ENCODE measurements at regions of chr1 and their contacts with region 1.

Region 1: GRCh38 chr1:38873027-38873969 is at the start of gene MYCBP:
- DNase-seq: peak; percentile 96
- H3K4me3 Mint-ChIP-seq: peak within 1 kb of the TSS; percentile 83
- H3K27ac Mint-ChIP-seq: peak within 1 kb of the TSS; percentile 17
- H3K4me1 Mint-ChIP-seq: peaks cover 19% of the 10 kb centered on the region
- H3K27me3 Mint-ChIP-seq: no peaks in the 10 kb centered on the region
- CTCF ChIP-seq: no peak
- total RNA-seq, gene MYCBP: 16.1 and 18.9 TPM in 2 replicates

Region 2: DNA sequence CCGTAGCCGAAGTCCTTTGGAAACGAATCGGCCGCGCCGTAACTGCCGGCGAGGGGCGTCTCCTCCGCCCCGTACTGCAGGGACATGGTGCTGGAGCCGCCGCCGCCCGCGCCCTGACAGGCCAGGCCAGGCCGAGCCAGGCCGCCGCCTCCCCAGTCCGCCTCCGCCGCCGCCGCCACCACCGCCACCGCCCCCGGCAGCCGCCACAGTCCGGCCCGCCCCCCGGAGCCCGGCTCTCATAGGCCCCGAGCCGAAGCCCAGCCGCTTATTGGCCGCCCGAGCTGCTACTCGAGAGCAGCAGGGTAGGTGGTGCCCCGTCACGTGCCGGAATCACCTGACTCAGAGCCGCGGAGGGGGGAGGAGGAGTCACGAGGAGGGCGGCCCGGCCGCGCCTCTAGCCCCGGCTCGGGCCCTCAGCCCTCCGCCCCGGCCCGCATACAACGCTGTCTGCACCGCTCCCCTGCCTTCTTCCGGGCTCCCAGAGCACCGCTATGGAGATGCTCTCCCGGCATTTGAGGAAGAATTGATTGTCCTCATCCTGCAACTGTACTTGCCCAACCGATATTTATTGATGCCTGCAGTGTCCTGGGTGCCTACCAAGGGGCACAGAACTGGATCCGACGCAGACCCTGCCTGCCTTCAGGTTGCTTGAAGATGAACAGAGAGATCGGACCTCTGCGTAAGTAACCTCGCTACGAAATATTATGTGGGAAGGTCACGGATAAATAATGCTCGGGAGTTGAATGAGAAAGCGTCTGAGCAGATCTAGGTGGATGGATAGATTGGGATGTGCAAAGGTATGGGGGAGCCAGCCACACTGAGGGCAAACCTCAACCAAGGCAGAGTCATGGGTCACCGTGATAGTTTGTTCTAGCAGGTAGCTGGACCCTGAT is 13.5 kb before region 1 on chr1 and contains the start of gene RRAGC:
- CTCF ChIA-PET with region 1: interaction called, 3 read pairs
- POLR2A ChIA-PET with region 1: interaction called, 76 read pairs
- intact Hi-C with region 1: loop called (anchors 1 kb)
- DNase-seq: peak; percentile 99
- H3K4me3 Mint-ChIP-seq: peak within 1 kb of the TSS; percentile 93
- H3K27ac Mint-ChIP-seq: peak within 1 kb of the TSS; percentile 81
- H3K4me1 Mint-ChIP-seq: peaks cover 21% of the 10 kb centered on the region
- H3K27me3 Mint-ChIP-seq: no peaks in the 10 kb centered on the region
- CTCF ChIP-seq: no peak
- total RNA-seq, gene RRAGC: 23.3 and 40.6 TPM in 2 replicates

Region 3: GRCh38 chr1:38908821-38909220 is 35.5 kb after region 1 on chr1:
- CTCF ChIA-PET with region 1: no interaction called
- POLR2A ChIA-PET with region 1: no interaction called
- intact Hi-C with region 1: no loop called
- DNase-seq: no peak
- H3K4me3 Mint-ChIP-seq: no peak overlapping the region
- H3K27ac Mint-ChIP-seq: peak overlapping the region; percentile 9
- H3K4me1 Mint-ChIP-seq: no peaks in the 10 kb centered on the region
- H3K27me3 Mint-ChIP-seq: no peaks in the 10 kb centered on the region
- CTCF ChIP-seq: no peak

Region 4: DNA sequence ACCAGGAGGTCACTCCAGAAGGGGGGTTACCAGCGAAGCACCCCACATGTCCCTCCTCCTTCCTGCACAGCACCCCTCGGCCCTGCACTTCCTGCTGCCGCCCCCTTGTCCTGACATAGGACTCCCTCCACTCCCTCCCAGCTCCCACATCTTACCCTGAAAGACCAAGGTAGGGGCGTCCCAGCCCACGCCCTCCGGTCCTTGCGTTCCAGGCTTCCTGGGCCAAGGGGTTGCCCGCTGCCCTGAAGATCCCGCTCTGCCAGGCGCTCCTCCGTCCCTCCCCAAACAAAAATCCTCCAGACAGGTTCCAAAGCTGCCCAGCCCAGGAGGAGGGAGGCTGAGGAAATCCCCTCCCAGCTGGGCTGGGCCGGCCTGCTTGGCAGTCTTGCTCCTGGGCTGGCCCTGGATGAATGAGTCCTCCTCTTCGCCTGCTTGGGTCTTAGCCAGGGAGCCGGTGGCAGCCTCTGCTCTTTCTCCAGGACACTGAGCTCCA is 68.3 kb after region 1 on chr1 and contains the start of gene RHBDL2:
- CTCF ChIA-PET with region 1: no interaction called
- POLR2A ChIA-PET with region 1: interaction called, 4 read pairs
- intact Hi-C with region 1: loop called (anchors 1 kb)
- DNase-seq: peak; percentile 84
- H3K4me3 Mint-ChIP-seq: peak within 1 kb of the TSS; percentile 91
- H3K27ac Mint-ChIP-seq: peak within 1 kb of the TSS; percentile 60
- H3K4me1 Mint-ChIP-seq: peaks cover 15% of the 10 kb centered on the region
- H3K27me3 Mint-ChIP-seq: no peaks in the 10 kb centered on the region
- CTCF ChIP-seq: no peak
- total RNA-seq, gene RHBDL2: 0.30 and 0.52 TPM in 2 replicates

Region 5: DNA sequence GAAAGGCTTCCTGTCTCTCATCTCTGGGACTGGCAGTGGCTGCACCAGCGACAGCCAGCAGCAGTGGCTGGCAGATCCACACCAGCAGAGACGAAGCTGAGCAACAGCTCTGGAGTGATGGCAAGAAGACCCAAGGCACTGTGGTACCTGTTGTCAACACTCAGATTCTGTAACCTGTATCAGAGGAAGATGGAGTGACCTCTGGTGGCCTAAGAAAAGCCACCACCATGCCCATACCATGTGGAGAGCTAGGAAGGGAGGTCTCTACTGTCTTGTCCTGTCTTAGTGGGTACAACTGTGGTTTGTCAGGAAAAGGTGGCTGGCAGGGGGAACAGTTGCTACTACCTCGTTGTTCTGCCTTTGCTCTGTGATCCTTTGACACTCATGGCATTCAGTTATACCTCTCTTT is 90.8 kb after region 1 on chr1:
- CTCF ChIA-PET with region 1: no interaction called
- POLR2A ChIA-PET with region 1: no interaction called
- intact Hi-C with region 1: no loop called
- DNase-seq: peak; percentile 22
- H3K4me3 Mint-ChIP-seq: no peak overlapping the region
- H3K27ac Mint-ChIP-seq: no peak overlapping the region
- H3K4me1 Mint-ChIP-seq: peaks cover 14% of the 10 kb centered on the region
- H3K27me3 Mint-ChIP-seq: no peaks in the 10 kb centered on the region
- CTCF ChIP-seq: no peak

Region 6: DNA sequence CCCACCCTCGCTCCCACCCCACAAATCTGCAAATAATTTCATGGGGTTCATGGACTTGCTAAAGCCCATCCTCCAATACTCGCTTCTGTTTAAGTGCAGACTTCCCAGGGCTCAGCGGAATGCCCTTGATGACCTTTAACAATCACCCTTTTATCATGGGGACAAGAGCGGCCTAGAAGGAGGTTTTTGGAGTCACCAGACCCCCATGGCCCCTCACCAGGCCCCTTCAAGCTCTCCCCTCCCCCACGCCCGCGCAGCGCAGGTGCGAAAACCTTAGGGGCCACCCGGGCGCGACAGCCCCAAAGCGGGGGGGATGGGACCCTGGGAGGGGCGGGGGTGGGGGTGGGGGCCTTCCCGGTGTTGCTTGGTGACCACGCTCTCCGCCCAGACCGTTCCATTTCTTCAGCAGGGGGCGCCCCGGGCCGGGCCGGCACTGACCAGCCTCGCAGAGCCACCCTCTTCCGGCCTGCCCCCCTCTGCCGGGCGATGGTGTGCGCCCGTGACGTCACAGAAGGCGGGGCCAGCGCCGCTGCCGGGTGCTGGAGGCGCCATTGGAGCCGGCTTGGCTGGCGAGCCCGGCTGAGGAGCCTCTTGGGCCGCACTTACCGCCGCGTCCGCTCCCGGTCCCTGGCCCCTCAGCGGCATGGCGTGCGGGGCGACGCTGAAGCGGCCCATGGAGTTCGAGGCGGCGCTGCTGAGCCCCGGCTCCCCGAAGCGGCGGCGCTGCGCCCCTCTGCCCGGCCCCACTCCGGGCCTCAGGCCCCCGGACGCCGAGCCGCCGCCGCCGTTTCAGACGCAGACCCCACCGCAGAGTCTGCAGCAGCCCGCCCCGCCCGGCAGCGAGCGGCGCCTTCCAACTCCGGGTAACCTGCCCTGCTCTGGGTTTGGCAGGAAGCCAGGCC is 117.7 kb after region 1 on chr1 and contains the start of gene AKIRIN1:
- CTCF ChIA-PET with region 1: interaction called, 4 read pairs
- POLR2A ChIA-PET with region 1: interaction called, 16 read pairs
- intact Hi-C with region 1: loop called (anchors 2 kb)
- DNase-seq: peak; percentile 92
- H3K4me3 Mint-ChIP-seq: peak within 1 kb of the TSS; percentile 79
- H3K27ac Mint-ChIP-seq: peak within 1 kb of the TSS; percentile 76
- H3K4me1 Mint-ChIP-seq: peaks cover 21% of the 10 kb centered on the region
- H3K27me3 Mint-ChIP-seq: no peaks in the 10 kb centered on the region
- CTCF ChIP-seq: no peak
- total RNA-seq, gene AKIRIN1: 59.0 and 63.7 TPM in 2 replicates

Region 7: GRCh38 chr1:39091845-39092645 is 218.7 kb after region 1 on chr1:
- CTCF ChIA-PET with region 1: no interaction called
- POLR2A ChIA-PET with region 1: no interaction called
- intact Hi-C with region 1: loop called (anchors 1 kb)
- DNase-seq: peak; percentile 83
- H3K4me3 Mint-ChIP-seq: no peak overlapping the region
- H3K27ac Mint-ChIP-seq: no peak overlapping the region
- H3K4me1 Mint-ChIP-seq: no peaks in the 10 kb centered on the region
- H3K27me3 Mint-ChIP-seq: no peaks in the 10 kb centered on the region
- CTCF ChIP-seq: peak; percentile 74